ENCODE measurements at regions of chr1 and their contacts with region 1.

Region 1: DNA sequence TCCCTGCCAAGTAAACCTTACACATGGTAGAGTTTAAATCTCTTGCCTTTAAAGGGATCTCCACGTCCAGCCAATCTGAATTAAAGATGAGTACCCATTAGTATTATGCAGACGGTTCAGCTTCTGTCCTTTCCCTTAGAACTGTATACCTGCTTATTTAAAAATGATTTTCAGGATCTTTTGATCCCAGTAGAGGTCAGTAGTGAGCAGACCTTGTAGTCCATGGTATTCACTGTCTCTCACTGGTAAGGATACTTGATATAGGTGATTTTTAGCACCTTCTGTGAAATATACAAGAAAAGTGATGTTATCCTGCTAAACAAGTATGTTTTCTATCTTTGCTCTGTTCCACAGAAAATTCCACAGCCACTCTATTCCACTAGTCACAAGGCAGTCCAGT is 1211.6 kb upstream of the ADGRL4 start:
- DNase-seq: peak; percentile 10
- H3K4me3 Mint-ChIP-seq: no peak overlapping the region
- H3K27ac Mint-ChIP-seq: no peak overlapping the region
- H3K4me1 Mint-ChIP-seq: peaks cover 8% of the 10 kb centered on the region
- H3K27me3 Mint-ChIP-seq: no peaks in the 10 kb centered on the region
- CTCF ChIP-seq: no peak

Region 2: DNA sequence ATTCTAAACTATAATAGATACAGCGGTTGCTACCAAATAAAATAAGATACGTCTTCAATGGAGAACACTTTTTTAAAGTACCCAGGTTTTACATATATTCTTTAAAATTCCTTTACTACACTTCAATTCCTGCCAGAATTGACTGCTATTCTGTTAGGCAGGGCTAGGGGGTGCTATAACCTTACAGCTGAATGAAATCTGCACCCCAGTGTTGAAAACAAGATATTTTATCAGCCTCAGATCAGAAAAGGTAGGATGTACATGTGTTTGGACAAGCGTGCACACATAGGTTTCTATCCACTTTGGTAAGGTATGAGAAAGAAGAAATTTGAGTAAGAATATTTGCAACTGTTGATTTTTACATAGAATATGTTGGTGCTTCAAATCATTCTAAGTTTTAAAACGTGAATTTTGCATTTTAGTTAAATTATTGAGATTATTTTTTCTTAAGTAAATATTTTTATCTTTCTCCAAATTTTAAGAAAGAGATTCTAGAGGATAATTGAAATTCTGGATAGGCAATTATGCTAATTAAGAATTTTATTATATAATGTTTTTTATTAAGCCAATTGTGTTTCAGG is 720.8 kb before region 1 on chr1:
- CTCF ChIA-PET with region 1: no interaction called
- intact Hi-C with region 1: loop called (anchors 1 kb)
- DNase-seq: peak; percentile 65
- H3K4me3 Mint-ChIP-seq: no peak overlapping the region
- H3K27ac Mint-ChIP-seq: no peak overlapping the region
- H3K4me1 Mint-ChIP-seq: no peaks in the 10 kb centered on the region
- H3K27me3 Mint-ChIP-seq: no peaks in the 10 kb centered on the region
- CTCF ChIP-seq: peak; percentile 72

Region 3: DNA sequence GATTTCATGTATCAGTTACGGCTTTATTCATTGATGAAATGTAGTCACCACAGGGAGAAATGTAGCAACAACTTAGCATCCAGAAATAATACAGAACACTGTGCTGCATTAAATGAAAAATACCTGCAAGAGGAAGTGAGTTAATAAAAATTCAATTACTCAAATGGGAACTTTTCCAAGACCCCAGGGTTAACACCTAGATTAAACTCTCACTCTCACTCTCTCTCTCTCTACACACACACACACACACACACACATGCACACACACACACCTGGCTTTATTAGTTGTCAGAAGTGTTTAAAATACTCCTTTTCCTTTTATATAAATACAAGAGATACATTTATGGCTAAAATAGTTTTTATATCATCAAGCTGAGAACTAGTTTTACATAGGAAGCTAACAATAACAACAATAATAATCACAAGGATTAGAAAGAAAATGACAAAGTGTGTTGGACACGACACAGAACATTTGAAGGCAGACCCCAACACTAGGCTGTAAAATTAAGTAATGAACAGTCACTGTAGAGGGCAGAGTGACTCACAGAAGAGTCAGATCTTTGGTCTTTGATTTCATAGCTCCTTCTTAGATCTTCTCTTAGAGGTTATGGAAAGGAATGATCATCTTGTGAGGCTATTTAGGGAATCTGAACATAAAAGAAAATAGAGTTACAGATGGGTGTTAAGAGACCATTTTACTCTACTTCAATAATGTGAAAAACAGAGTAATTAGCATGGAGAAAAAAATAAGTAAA is 316.7 kb after region 1 on chr1:
- CTCF ChIA-PET with region 1: no interaction called
- intact Hi-C with region 1: loop called (anchors 5 kb)
- DNase-seq: peak; percentile 33
- H3K4me3 Mint-ChIP-seq: peak overlapping the region; percentile 89
- H3K27ac Mint-ChIP-seq: peak overlapping the region; percentile 96
- H3K4me1 Mint-ChIP-seq: peaks cover 42% of the 10 kb centered on the region
- H3K27me3 Mint-ChIP-seq: no peaks in the 10 kb centered on the region
- CTCF ChIP-seq: no peak

Region 4: GRCh38 chr1:80882552-80882951 is 664.4 kb after region 1 on chr1:
- CTCF ChIA-PET with region 1: no interaction called
- intact Hi-C with region 1: loop called (anchors 10 kb)
- DNase-seq: peak; percentile 51
- H3K4me3 Mint-ChIP-seq: no peak overlapping the region
- H3K27ac Mint-ChIP-seq: peak overlapping the region; percentile 51
- H3K4me1 Mint-ChIP-seq: peaks cover 14% of the 10 kb centered on the region
- H3K27me3 Mint-ChIP-seq: no peaks in the 10 kb centered on the region
- CTCF ChIP-seq: no peak

Region 5: GRCh38 chr1:81525085-81525484 is 1307.0 kb after region 1 on chr1:
- CTCF ChIA-PET with region 1: no interaction called
- intact Hi-C with region 1: loop called (anchors 5 kb)
- DNase-seq: no peak
- H3K4me3 Mint-ChIP-seq: no peak overlapping the region
- H3K27ac Mint-ChIP-seq: no peak overlapping the region
- H3K4me1 Mint-ChIP-seq: no peaks in the 10 kb centered on the region
- H3K27me3 Mint-ChIP-seq: no peaks in the 10 kb centered on the region
- CTCF ChIP-seq: no peak

Measured in Calu3 (cell line).